OCI-LY7 (cell line): ENCODE measurements at regions of chr3 and their contacts with region 1.

Region 1: DNA sequence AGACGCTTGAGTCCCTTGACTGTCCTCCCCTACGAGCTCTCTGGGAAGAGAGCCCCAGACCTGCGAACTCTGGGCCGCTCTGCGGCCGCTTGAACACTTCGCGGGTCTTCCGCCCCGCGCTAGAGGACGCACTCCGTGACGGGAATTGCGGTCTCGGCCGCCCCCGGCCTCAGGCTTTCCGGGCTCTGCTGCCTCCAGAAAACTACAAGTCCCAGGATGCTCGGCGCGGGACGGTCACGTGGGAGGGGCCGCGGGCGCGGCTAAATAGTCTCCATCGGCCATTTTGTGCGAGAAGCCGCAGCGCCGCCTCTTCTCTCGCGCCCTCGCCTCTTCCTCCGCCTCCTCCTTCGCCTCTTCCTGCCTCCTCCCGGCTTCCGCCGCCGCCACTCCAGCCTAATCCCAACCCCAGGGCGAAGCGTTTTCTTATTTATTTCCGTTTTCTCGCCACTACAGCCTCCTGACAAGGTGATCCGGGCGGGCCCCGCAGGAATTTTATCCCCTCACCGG is at the start of gene EIF1B:
- DNase-seq: peak; percentile 97
- H3K4me3 ChIP-seq: peak within 1 kb of the TSS; percentile 76
- H3K27ac ChIP-seq: peak within 1 kb of the TSS; percentile 50
- H3K4me1 ChIP-seq: peaks cover 36% of the 10 kb centered on the region
- CTCF ChIP-seq: peak; percentile 86
- total RNA-seq, gene EIF1B: 14.0 and 14.5 TPM in 2 replicates

Region 2: DNA sequence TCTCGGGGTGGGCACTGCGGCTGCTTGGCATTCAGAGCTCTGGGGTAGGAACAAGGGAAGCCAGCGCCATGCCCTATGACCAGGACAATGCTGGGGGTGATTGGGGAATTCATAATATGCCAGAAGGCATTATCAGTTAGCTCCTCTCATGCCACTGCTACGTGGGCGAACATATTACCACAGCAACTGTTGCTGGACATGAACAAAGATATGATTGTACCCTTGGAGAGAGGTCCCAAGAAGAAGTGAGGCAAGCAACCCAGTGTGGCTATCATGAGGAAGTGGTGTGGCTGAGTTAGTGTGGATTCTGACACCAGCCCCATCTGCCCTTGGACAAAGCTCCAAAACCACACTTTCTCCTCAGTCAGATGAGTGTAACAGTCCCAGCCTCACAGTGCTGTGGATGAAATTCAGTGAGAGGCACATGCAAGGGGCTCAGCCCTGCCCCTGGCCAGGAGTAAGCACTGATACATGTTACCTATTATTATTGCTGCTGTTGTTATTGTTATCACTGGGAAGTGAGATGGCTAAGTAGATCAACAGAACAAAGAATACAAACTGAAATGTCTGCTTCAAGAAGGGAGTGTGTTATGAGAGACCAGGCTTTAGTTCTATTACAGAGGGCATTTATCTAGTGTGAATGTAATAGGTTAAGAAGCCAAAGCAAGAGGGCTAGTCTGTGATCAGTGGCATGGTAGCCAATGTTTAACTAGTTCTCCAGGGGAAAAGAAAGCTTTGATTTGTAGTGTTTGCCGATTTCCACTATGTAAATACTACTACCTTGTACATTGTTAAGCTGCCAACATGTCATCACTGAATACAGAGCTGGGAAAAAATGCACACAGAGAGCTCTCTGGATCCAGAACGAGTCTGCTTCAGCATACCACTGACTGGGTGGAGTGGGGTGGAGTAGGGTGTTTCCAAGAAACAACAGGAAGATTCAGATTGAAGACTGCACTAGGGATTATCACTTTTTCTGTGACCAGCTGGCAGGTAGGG is 222.3 kb before region 1 on chr3:
- CTCF ChIA-PET with region 1: no interaction called
- POLR2A ChIA-PET with region 1: no interaction called
- intact Hi-C with region 1: no loop called
- DNase-seq: no peak
- H3K4me3 ChIP-seq: no peak overlapping the region
- H3K27ac ChIP-seq: no peak overlapping the region
- H3K4me1 ChIP-seq: no peaks in the 10 kb centered on the region
- CTCF ChIP-seq: no peak

Region 3: DNA sequence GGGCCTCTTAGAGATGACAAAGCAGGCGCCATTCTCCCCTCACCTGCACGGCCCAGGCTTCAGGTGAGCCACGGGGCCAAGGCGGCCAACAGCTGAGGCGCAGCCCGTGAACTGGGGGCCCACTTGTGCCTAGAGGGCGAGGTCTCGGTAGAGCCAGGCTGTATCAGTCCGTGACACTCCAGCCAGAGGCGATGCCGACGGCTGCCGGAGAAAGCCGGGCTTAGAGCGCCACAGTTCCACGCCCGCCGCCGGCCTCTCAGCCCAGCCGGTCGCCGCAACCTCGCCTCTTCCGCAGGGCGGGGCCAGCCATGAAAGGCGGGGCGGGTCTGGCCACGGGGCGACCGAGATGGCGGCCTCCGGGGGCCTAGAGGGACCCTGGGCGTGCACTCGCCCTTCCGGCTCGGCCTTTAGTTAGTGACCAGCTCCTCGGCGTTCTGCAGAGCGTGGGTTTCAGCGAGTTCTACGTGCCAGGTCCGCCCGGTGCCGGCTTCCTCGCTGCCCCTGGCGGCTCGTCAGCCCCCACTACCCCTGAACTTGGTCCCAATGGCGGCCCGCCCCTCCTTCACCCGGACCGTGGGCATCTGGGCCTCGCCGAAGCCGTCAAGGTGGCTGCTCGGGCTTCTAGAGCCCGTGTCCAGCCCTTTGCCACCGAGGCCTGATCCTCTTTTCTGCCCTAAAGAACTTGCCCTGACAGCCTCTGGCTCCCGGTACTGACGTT is 215.3 kb after region 1 on chr3 and contains the start of gene ZNF621:
- CTCF ChIA-PET with region 1: no interaction called
- POLR2A ChIA-PET with region 1: interaction called, 4 read pairs
- intact Hi-C with region 1: loop called (anchors 5 kb)
- DNase-seq: peak; percentile 75
- H3K4me3 ChIP-seq: peak within 1 kb of the TSS; percentile 70
- H3K27ac ChIP-seq: no peak within 1 kb of the TSS
- H3K4me1 ChIP-seq: peaks cover 5% of the 10 kb centered on the region
- CTCF ChIP-seq: no peak
- total RNA-seq, gene ZNF621: 4.8 and 5.0 TPM in 2 replicates